ENCODE measurements at regions of chr7 and their contacts with region 1.

Region 1: GRCh38 chr7:43582503-43583423 is at the start of gene STK17A:
- DNase-seq: peak; percentile 34
- H3K4me3 ChIP-seq: peak within 1 kb of the TSS; percentile 77
- H3K27me3 ChIP-seq: 0 out of 2 replicates have a peak, but pooled peaks cover 2% of the 10 kb centered on the region
- CTCF ChIP-seq: peak; percentile 99
- polyA plus RNA-seq, gene STK17A: 12.3 and 26.5 TPM in 2 replicates

Region 2: DNA sequence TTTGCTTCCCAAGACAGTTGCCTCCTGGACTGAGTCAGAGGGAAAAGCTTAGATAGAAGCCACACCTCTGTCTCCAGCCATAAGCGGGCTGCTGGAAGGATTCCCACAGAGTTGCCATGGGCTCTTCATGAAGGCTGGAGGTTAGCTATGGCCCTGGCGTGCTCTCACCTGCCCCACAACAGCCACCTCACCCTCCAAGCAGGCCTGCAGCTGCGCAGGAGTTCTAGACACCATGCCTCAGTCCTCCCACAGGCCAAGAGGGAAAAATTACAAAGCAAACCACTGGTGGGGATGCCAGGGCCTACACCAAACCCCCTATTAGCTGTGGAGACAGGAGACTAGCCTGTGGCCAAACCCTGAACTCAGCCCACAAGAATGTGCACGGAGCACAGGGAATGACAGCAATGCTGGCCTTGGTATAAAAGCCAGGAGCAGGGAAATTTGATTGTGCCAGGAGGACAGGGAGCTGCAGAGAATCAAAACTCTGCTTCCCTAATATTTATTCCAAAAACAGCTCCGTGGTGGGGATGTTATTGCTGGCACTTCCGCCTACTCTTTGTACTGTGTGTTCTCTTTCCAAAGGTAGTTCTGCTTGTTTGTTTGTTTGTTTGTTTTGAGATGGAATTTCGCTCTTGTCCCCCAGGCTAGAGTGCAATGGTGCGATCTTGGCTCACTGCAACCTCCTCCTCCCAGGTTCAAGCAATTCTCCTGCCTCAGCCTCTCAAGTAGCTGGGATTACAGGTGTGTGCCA is 60.2 kb before region 1 on chr7:
- CTCF ChIA-PET with region 1: interaction called, 10 read pairs
- POLR2A ChIA-PET with region 1: interaction called, 3 read pairs
- DNase-seq: peak; percentile 55
- H3K4me3 ChIP-seq: no peak overlapping the region
- H3K27me3 ChIP-seq: no peaks in the 10 kb centered on the region
- CTCF ChIP-seq: no peak

Region 3: GRCh38 chr7:43612599-43613589 is 30.1 kb after region 1 on chr7:
- CTCF ChIA-PET with region 1: interaction called, 12 read pairs
- POLR2A ChIA-PET with region 1: interaction called, 7 read pairs
- DNase-seq: peak; percentile 38
- H3K4me3 ChIP-seq: no peak overlapping the region
- H3K27me3 ChIP-seq: no peaks in the 10 kb centered on the region
- CTCF ChIP-seq: no peak

Region 4: GRCh38 chr7:43639858-43640491 is 57.2 kb after region 1 on chr7:
- CTCF ChIA-PET with region 1: interaction called, 95 read pairs
- POLR2A ChIA-PET with region 1: no interaction called
- DNase-seq: no peak
- H3K4me3 ChIP-seq: no peak overlapping the region
- H3K27me3 ChIP-seq: no peaks in the 10 kb centered on the region
- CTCF ChIP-seq: no peak

Region 5: DNA sequence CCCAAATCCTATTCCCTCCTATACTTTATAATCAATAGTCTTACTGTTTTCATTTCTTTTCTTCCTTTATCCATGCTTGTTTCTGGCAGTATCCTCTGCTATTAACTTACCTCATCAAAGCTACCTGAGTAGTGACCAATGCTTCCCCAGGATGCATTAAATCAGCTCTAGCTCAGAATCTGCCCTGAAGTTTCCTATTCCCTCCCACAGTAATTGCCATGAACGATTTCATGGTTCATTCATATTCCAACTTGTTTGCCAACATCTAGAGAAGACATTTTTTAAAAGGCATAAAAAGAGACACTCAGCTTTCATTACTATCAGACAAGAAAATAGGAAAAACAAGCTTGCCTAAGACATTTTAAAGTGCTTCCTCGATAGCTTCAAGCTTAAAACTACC is 104.2 kb after region 1 on chr7:
- CTCF ChIA-PET with region 1: interaction called, 45 read pairs
- POLR2A ChIA-PET with region 1: no interaction called
- DNase-seq: no peak
- H3K4me3 ChIP-seq: no peak overlapping the region
- H3K27me3 ChIP-seq: no peaks in the 10 kb centered on the region
- CTCF ChIP-seq: no peak

Region 6: GRCh38 chr7:43711503-43711902 is 128.7 kb after region 1 on chr7:
- CTCF ChIA-PET with region 1: interaction called, 130 read pairs
- POLR2A ChIA-PET with region 1: interaction called, 12 read pairs
- DNase-seq: no peak
- H3K4me3 ChIP-seq: no peak overlapping the region
- H3K27me3 ChIP-seq: no peaks in the 10 kb centered on the region
- CTCF ChIP-seq: no peak

Region 7: DNA sequence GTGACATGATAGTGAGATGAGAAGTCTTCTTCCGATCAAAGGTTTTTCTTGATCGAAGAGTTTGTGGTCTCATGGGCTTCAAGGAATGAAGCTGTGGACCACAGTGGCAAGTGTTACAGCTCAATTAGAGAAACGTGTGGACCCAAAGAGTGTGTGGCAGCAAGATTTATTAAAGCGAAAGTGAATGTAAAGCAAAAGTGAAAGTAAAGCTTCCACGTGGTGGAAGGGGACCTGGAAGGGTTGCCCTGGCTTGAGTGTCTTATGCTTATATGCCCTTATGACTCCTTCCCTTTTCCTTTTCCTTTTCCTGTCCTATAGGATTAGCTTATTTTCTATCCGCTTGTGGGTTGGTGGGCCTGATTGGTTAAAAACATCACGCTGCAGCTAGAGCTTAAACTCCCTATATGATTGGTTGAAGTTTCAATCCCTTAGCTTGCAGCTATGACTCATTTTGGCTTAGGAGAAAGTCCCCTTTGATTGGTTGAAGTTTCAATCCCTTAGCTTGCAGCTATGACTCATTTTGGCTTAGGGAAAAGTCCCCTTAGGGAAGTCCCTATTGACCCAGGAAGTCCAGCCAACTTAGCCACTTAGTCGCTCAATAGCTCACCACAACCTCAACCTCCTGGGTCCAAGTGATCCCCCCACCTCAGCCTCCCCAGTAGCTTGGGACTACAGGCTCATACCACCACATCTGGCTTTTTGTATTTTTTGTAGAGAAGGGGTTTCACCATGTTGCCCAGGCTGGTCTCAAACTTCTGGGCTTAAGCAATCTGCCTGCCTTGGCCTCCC is 251.9 kb after region 1 on chr7:
- CTCF ChIA-PET with region 1: interaction called, 66 read pairs
- POLR2A ChIA-PET with region 1: no interaction called
- DNase-seq: no peak
- H3K4me3 ChIP-seq: no peak overlapping the region
- H3K27me3 ChIP-seq: no peaks in the 10 kb centered on the region
- CTCF ChIP-seq: no peak